Caco-2 (cell line): ENCODE measurements at regions of chr10 and their contacts with region 1.

Region 1: DNA sequence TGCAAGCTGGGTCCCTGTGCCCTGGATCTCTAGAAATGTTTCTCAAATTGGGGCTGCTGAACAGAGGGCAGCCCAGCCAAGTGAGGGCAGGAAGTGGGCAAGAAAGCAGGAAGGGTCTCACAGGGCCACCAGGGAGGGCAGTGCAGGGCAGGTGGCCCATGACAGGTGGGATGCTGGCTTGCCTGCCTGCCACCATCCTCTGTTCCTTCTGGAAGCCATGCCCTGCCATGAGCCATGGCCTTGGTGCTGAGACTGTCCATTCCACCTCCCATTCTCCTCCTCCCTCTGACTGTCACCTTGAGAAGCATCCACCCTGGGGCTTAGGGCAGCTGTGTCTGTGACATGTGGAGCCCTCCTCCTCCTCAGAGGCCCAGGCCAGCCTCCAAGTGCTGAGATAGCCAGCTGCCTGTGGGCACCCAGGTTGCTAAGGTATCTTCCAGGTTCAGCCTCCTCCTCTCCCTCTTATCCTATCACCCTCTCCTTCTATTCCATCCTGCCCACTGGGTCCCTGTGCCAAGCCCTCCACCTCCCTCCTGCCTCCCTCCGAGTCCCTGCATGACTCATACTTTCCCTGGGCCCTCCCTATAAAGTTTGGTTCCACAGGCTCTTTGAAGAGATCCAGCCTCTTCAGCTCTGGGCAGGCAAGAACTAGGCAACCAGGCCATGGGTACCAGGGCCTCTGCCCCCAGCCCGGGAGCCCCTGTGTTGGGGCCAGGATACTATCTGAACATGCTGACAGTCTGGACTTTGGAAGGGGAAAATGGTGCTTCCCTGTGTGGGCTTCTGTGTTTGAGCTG is 1.3 kb downstream of the VSIR start:
- DNase-seq: no peak
- H3K4me3 ChIP-seq: peak overlapping the region; percentile 56; the same call in 1 of the 2 replicates
- H3K4me3 Mint-ChIP-seq: peak overlapping the region; percentile 70
- H3K27ac Mint-ChIP-seq: peak overlapping the region; percentile 1
- H3K4me1 ChIP-seq: peaks cover 65% of the 10 kb centered on the region
- H3K4me1 Mint-ChIP-seq: peaks cover 27% of the 10 kb centered on the region
- H3K27me3 ChIP-seq: no peaks in the 10 kb centered on the region
- H3K27me3 Mint-ChIP-seq: no peaks in the 10 kb centered on the region
- CTCF ChIP-seq: no peak

Region 2: GRCh38 chr10:71713135-71714030 is 58.6 kb before region 1 on chr10:
- CTCF ChIA-PET with region 1: interaction called, 12 read pairs
- POLR2A ChIA-PET with region 1: no interaction called
- intact Hi-C with region 1: loop called (anchors 5 kb)
- DNase-seq: peak in 1 of 2 experiments; percentile 38
- H3K4me3 ChIP-seq: no peak overlapping the region
- H3K4me3 Mint-ChIP-seq: no peak overlapping the region
- H3K27ac Mint-ChIP-seq: no peak overlapping the region
- H3K4me1 ChIP-seq: peaks cover 10% of the 10 kb centered on the region
- H3K4me1 Mint-ChIP-seq: no peaks in the 10 kb centered on the region
- H3K27me3 ChIP-seq: no peaks in the 10 kb centered on the region
- H3K27me3 Mint-ChIP-seq: no peaks in the 10 kb centered on the region
- CTCF ChIP-seq: no peak

Region 3: GRCh38 chr10:71727738-71728737 is 44.0 kb before region 1 on chr10:
- CTCF ChIA-PET with region 1: interaction called, 3 read pairs
- POLR2A ChIA-PET with region 1: no interaction called
- intact Hi-C with region 1: loop called (anchors 2 kb)
- DNase-seq: no peak
- H3K4me3 ChIP-seq: no peak overlapping the region
- H3K4me3 Mint-ChIP-seq: no peak overlapping the region
- H3K27ac Mint-ChIP-seq: no peak overlapping the region
- H3K4me1 ChIP-seq: peaks cover 17% of the 10 kb centered on the region
- H3K4me1 Mint-ChIP-seq: peaks cover 15% of the 10 kb centered on the region
- H3K27me3 ChIP-seq: no peaks in the 10 kb centered on the region
- H3K27me3 Mint-ChIP-seq: no peaks in the 10 kb centered on the region
- CTCF ChIP-seq: no peak

Region 4: GRCh38 chr10:71945819-71946474 is 173.9 kb after region 1 on chr10:
- CTCF ChIA-PET with region 1: no interaction called
- POLR2A ChIA-PET with region 1: no interaction called
- intact Hi-C with region 1: no loop called
- DNase-seq: peak; percentile 7 to 59
- H3K4me3 ChIP-seq: no peak overlapping the region
- H3K4me3 Mint-ChIP-seq: no peak overlapping the region
- H3K27ac Mint-ChIP-seq: no peak overlapping the region
- H3K4me1 ChIP-seq: 0 out of 2 replicates have a peak, but pooled peaks cover 9% of the 10 kb centered on the region
- H3K4me1 Mint-ChIP-seq: no peaks in the 10 kb centered on the region
- H3K27me3 ChIP-seq: no peaks in the 10 kb centered on the region
- H3K27me3 Mint-ChIP-seq: no peaks in the 10 kb centered on the region
- CTCF ChIP-seq: no peak